ENCODE measurements at regions of chr6 and their contacts with region 1.

Region 1: DNA sequence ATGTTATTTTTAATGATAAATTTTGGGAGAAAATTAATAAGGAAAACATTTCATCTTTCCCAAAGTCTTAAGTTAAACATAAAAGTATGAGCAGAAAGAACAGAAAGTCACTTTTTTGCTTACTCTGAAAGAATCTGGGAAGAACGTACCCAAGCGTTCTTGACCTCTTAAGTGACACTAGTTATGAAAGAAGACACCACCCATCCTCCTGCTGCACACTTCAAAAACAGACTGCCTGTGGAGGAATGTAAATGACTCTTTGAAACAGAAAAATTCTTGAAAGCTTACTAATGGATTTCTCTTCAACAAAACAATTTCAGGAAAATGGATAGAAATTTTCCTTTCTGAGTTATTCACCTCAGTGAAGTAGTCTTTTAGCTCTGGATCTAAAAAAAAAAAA is 227.7 kb downstream of the MEI4 start:
- DNase-seq: no peak
- H3K4me3 ChIP-seq: no peak overlapping the region
- H3K27ac ChIP-seq: no peak overlapping the region
- H3K4me1 ChIP-seq: no peaks in the 10 kb centered on the region
- CTCF ChIP-seq: no peak

Region 2: DNA sequence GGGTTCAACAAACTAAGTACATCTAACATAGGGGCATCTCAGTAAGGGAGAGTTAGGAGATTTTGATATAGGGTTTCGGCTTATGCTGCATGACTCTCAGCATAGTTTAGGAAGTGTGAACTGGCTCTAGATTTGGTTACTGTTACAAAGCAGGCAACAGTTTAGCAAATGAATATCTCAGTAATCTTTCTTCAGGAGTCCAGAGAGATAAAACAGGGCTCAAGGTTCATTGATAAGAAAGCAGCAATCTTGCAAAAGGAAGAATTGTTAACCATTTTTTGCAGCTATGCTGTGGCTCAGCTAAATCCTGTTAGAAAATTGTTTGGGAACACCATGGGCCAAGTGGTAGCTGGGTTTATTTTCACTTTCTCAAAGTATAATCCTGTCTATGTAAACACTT is 66.4 kb before region 1 on chr6:
- CTCF ChIA-PET with region 1: no interaction called
- POLR2A ChIA-PET with region 1: no interaction called
- intact Hi-C with region 1: no loop called
- DNase-seq: no peak
- H3K4me3 ChIP-seq: no peak overlapping the region
- H3K27ac ChIP-seq: no peak overlapping the region
- H3K4me1 ChIP-seq: no peaks in the 10 kb centered on the region
- CTCF ChIP-seq: no peak

Region 3: DNA sequence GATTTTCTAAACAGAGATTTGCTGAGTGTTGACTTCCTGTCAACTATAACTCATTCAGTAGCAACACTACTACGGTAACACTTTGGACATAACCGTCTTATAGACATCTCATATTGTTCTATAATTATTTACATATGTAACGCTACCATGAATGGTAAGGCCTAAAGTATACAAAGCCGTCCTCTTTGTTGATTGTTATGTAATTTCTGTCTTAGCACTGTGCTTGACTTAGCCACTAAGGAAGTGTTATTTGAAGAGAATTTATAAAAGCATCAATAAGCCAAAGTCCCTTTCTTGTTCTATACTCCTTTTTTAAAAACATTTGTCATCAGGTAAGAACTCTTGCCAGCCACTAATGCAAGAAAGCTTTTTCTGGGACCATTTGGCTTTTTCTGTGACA is 12.9 kb after region 1 on chr6:
- CTCF ChIA-PET with region 1: no interaction called
- POLR2A ChIA-PET with region 1: no interaction called
- intact Hi-C with region 1: no loop called
- DNase-seq: no peak
- H3K4me3 ChIP-seq: no peak overlapping the region
- H3K27ac ChIP-seq: no peak overlapping the region
- H3K4me1 ChIP-seq: no peaks in the 10 kb centered on the region
- CTCF ChIP-seq: no peak

Region 4: GRCh38 chr6:77930952-77931351 is 50.5 kb after region 1 on chr6:
- CTCF ChIA-PET with region 1: no interaction called
- POLR2A ChIA-PET with region 1: no interaction called
- intact Hi-C with region 1: loop called (anchors 5 kb)
- DNase-seq: no peak
- H3K4me3 ChIP-seq: no peak overlapping the region
- H3K27ac ChIP-seq: no peak overlapping the region
- H3K4me1 ChIP-seq: no peaks in the 10 kb centered on the region
- CTCF ChIP-seq: no peak

Measured in OCI-LY7 (cell line).